Activated CD4-positive, alpha-beta memory T cell treated with anti-CD3 and anti-CD28 coated beads for 36 hours (primary cell): ENCODE measurements at regions of chr4 and their contacts with region 1.

Region 1: DNA sequence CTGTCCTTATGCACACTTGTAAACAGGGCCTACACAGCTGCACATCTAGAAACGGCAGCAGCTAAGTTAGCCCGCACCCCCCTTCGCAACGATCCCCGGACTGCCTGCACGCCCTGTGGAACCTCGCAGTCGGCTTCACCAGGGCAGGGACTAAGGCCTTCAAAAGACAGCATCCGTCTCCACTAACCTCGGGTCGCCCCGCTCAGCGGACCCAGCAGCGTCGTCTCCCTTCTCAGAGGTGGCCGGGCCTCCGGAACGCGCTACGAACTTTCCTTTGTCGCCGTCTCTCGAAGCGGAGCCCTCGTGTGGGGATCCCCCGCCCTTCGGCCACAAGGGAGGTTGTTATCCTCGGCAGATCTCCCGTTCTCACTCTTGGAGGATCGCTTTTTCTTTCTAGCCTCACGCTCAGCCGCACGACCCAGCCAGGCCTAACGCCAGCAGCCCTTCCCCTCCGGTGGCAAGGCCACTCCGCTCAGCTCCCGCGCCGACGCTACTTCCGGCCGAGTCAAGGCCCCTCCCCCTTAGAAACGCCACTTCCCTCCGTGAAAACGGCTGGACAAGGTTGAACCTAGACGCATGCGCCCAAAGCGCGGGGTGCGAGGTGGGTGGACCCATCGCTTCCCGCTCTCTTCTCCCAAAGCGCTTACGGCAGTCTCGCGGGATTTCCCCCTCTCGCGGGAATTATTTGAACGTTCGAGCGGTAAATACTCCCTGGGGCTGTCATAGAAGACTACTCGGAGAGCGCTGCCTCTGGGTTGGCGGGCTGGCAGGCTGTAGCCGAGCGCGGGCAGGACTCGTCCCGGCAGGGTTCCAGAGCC is at the starts of genes DCAF16 and NCAPG:
- DNase-seq: peak; percentile 99
- H3K4me3 Mint-ChIP-seq: peak within 1 kb of the TSS; percentile 94
- H3K27ac Mint-ChIP-seq: peak within 1 kb of the TSS; percentile 97
- H3K4me1 Mint-ChIP-seq: peaks cover 44% of the 10 kb centered on the region
- H3K27me3 Mint-ChIP-seq: no peaks in the 10 kb centered on the region
- total RNA-seq, gene DCAF16: 33.9 to 34.1 TPM
- total RNA-seq, gene NCAPG: 76.7 to 79.8 TPM

Region 2: GRCh38 chr4:16225863-16226815 is 1584.3 kb before region 1 on chr4 and contains the start of gene TAPT1:
- CTCF ChIA-PET with region 1: no interaction called
- POLR2A ChIA-PET with region 1: interaction called, 3 read pairs
- intact Hi-C with region 1: loop called (anchors 5 kb)
- DNase-seq: peak; percentile 87
- H3K4me3 Mint-ChIP-seq: peak within 1 kb of the TSS; percentile 94
- H3K27ac Mint-ChIP-seq: peak within 1 kb of the TSS; percentile 96
- H3K4me1 Mint-ChIP-seq: peaks cover 60% of the 10 kb centered on the region
- H3K27me3 Mint-ChIP-seq: no peaks in the 10 kb centered on the region
- total RNA-seq, gene TAPT1: 35.6 TPM

Region 3: GRCh38 chr4:17511950-17512795 is 298.3 kb before region 1 on chr4 and contains the start of gene QDPR:
- CTCF ChIA-PET with region 1: interaction called, 3 read pairs
- POLR2A ChIA-PET with region 1: interaction called, 3 read pairs
- intact Hi-C with region 1: loop called (anchors 1 kb)
- DNase-seq: peak; percentile 84
- H3K4me3 Mint-ChIP-seq: peak within 1 kb of the TSS; percentile 99
- H3K27ac Mint-ChIP-seq: peak within 1 kb of the TSS; percentile 77
- H3K4me1 Mint-ChIP-seq: peaks cover 26% of the 10 kb centered on the region
- H3K27me3 Mint-ChIP-seq: peaks cover 7% of the 10 kb centered on the region
- total RNA-seq, gene QDPR: 35.5 to 36.3 TPM

Region 4: DNA sequence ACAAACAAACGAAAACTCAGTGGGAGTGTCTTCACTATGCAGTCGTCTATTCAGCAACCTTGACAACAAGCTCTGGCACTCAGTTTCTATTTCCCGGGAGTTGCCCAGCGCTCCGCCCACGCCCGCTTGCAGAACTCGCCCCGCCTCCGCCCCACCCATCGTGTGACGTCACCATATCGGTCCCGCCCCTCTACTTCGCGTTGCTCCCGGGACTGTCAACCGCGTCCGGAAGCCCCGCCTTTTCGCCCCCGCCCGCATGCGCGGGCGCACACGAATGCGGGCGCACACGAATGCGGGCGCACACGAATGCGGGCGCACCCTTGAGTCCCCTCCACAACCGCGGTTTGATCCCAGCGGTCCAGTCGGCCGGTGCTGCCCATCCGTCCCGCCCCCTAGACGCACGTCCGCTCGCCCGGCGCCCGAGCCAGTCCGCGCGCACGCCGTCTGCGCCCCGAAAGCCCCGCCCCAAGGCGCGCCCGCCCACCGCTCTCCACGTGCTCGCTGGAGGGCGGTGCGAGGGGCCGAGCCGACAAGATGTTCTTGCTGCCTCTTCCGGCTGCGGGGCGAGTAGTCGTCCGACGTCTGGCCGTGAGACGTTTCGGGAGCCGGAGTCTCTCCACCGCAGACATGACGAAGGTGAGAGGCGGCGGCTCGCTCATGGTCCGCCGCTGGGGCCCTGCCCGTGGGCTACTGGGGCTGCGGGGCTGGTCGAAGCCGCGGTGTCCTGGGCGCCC is 233.4 kb before region 1 on chr4 and contains the start of gene LAP3:
- CTCF ChIA-PET with region 1: interaction called, 4 read pairs
- POLR2A ChIA-PET with region 1: interaction called, 9 read pairs
- intact Hi-C with region 1: loop called (anchors 1 kb)
- DNase-seq: peak; percentile 99
- H3K4me3 Mint-ChIP-seq: peak within 1 kb of the TSS; percentile 93
- H3K27ac Mint-ChIP-seq: peak within 1 kb of the TSS; percentile 94
- H3K4me1 Mint-ChIP-seq: peaks cover 20% of the 10 kb centered on the region
- H3K27me3 Mint-ChIP-seq: no peaks in the 10 kb centered on the region
- total RNA-seq, gene LAP3: 118 to 120 TPM

Region 5: GRCh38 chr4:17636696-17637622 is 173.5 kb before region 1 on chr4:
- CTCF ChIA-PET with region 1: no interaction called
- POLR2A ChIA-PET with region 1: no interaction called
- intact Hi-C with region 1: loop called (anchors 1 kb)
- DNase-seq: peak; percentile 82
- H3K4me3 Mint-ChIP-seq: no peak overlapping the region
- H3K27ac Mint-ChIP-seq: no peak overlapping the region
- H3K4me1 Mint-ChIP-seq: no peaks in the 10 kb centered on the region
- H3K27me3 Mint-ChIP-seq: no peaks in the 10 kb centered on the region

Region 6: GRCh38 chr4:17688011-17688441 is 122.4 kb before region 1 on chr4:
- CTCF ChIA-PET with region 1: no interaction called
- POLR2A ChIA-PET with region 1: no interaction called
- intact Hi-C with region 1: no loop called
- DNase-seq: no peak
- H3K4me3 Mint-ChIP-seq: no peak overlapping the region
- H3K27ac Mint-ChIP-seq: no peak overlapping the region
- H3K4me1 Mint-ChIP-seq: no peaks in the 10 kb centered on the region
- H3K27me3 Mint-ChIP-seq: peaks cover 1% of the 10 kb centered on the region

Region 7: GRCh38 chr4:17797808-17798207 is 12.7 kb before region 1 on chr4:
- CTCF ChIA-PET with region 1: interaction called, 25 read pairs
- POLR2A ChIA-PET with region 1: interaction called, 5 read pairs
- intact Hi-C with region 1: loop called (anchors 1 kb)
- DNase-seq: no peak
- H3K4me3 Mint-ChIP-seq: no peak overlapping the region
- H3K27ac Mint-ChIP-seq: no peak overlapping the region
- H3K4me1 Mint-ChIP-seq: peaks cover 10% of the 10 kb centered on the region
- H3K27me3 Mint-ChIP-seq: no peaks in the 10 kb centered on the region

Region 8: DNA sequence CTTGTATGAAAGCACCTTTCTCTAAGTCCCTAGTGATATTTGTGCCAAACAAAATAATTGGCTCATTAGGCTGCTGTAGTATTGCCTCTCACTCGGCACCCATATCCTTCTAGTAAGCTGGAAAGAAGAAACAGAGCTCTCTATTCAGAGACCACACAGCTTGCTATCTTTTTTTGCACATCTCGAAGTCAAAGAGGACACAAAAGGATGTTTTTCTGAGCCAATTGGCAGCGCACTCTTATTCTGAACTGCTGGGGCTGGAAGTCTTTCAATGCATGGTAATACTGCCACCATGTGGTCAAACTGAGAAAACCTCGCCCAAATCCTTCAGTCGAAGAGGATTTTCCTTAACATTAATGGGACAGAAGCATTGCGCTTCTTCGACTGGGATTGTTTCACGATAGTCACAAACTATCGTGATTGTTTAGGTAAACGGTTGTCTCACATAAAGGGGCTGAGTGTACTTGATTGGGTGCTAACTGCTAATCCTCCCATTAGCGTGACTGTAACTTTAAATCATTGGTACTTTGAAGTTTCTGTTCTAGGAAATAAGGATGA is 783.1 kb after region 1 on chr4:
- CTCF ChIA-PET with region 1: interaction called, 5 read pairs
- POLR2A ChIA-PET with region 1: no interaction called
- intact Hi-C with region 1: loop called (anchors 2 kb)
- DNase-seq: peak; percentile 48
- H3K4me3 Mint-ChIP-seq: no peak overlapping the region
- H3K27ac Mint-ChIP-seq: no peak overlapping the region
- H3K4me1 Mint-ChIP-seq: peaks cover 5% of the 10 kb centered on the region
- H3K27me3 Mint-ChIP-seq: peaks cover 16% of the 10 kb centered on the region